H1 (cell line): ENCODE measurements at regions of chr16 and their contacts with region 1.

Region 1: GRCh38 chr16:67393035-67393787 is at the start of gene TPPP3:
- DNase-seq: peak in 1 of 2 experiments; percentile 87
- H3K4me3 ChIP-seq: peak within 1 kb of the TSS; percentile 21 to 58 (median 39); a peak in 7 of 8 replicates
- H3K27ac ChIP-seq: no peak within 1 kb of the TSS
- H3K4me1 ChIP-seq: peaks cover 0 to 35% (median 23%) of the 10 kb centered on the region in 4 experiments; a peak in 6 of 7 replicates
- H3K27me3 ChIP-seq: peaks cover 24 to 48% (median 41%) of the 10 kb centered on the region in 4 experiments
- CTCF ChIP-seq: peak in 2 of 3 experiments; percentile 66 to 69; a peak in 3 of 4 replicates
- EP300 ChIP-seq: peak in 1 of 2 experiments; percentile 62; a peak in 1 of 3 replicates
- POLR2A ChIP-seq: no peak
- RAD21 ChIP-seq: peak; percentile 39 to 53; a peak in 2 of 4 replicates
- total RNA-seq, gene TPPP3: 0.61 and 1.0 TPM in 2 replicates

Region 2: DNA sequence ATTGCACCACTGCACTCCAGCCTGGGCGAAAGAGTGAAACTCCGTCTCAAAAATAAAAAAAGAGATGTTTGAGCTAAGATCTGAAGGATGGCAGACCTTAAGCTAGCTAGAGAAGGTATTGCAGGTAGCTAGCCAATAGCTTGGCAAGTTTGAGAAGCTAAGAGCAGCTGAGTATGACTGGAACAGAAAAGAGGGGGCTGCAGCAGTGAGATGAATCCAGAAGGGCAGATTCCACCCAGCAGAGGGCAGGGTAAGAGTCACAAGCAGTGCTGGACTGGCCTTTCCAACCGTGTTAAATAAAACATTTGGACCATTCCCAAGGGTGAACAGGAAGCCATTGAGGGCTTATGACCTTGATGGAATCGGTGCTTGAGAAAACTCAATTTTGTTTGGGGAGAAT is 289.1 kb before region 1 on chr16:
- CTCF ChIA-PET with region 1: no interaction called
- POLR2A ChIA-PET with region 1: no interaction called
- DNase-seq: peak in 1 of 2 experiments; percentile 64
- H3K4me3 ChIP-seq: no peak overlapping the region
- H3K27ac ChIP-seq: no peak overlapping the region
- H3K4me1 ChIP-seq: peaks cover 0 to 2% (median under 1%) of the 10 kb centered on the region in 4 experiments; a peak in 3 of 7 replicates
- H3K27me3 ChIP-seq: peaks cover 0 to 4% (median 1%) of the 10 kb centered on the region in 4 experiments; a peak in 2 of 7 replicates
- CTCF ChIP-seq: peak; percentile 64 to 84 (median 64)
- EP300 ChIP-seq: no peak
- POLR2A ChIP-seq: no peak
- RAD21 ChIP-seq: peak; percentile 21 to 40

Region 3: GRCh38 chr16:67173808-67174705 is 219.2 kb before region 1 on chr16:
- CTCF ChIA-PET with region 1: no interaction called
- POLR2A ChIA-PET with region 1: no interaction called
- DNase-seq: peak in 1 of 2 experiments; percentile 78
- H3K4me3 ChIP-seq: peak overlapping the region; percentile 27 to 57 (median 34)
- H3K27ac ChIP-seq: no peak overlapping the region
- H3K4me1 ChIP-seq: peaks cover 0 to 40% (median 30%) of the 10 kb centered on the region in 4 experiments; a peak in 6 of 7 replicates
- H3K27me3 ChIP-seq: peaks cover 50 to 90% (median 86%) of the 10 kb centered on the region in 4 experiments
- CTCF ChIP-seq: peak in 2 of 3 experiments; percentile 14 to 15; a peak in 2 of 4 replicates
- EP300 ChIP-seq: no peak
- POLR2A ChIP-seq: no peak
- RAD21 ChIP-seq: peak; percentile 7 to 23; a peak in 2 of 4 replicates

Region 4: GRCh38 chr16:67326472-67327309 is 66.5 kb before region 1 on chr16 and contains the starts of genes KCTD19 and LRRC36:
- CTCF ChIA-PET with region 1: interaction called, 18 read pairs
- POLR2A ChIA-PET with region 1: no interaction called
- DNase-seq: peak; percentile 73 to 100
- H3K4me3 ChIP-seq: peak within 1 kb of the TSS; percentile 36 to 68 (median 52)
- H3K27ac ChIP-seq: no peak within 1 kb of the TSS
- H3K4me1 ChIP-seq: no peaks in the 10 kb centered on the region; a peak in 1 of 7 replicates
- H3K27me3 ChIP-seq: peaks cover 0 to 4% (median under 1%) of the 10 kb centered on the region in 4 experiments; a peak in 3 of 7 replicates
- CTCF ChIP-seq: peak; percentile 75 to 90 (median 78)
- EP300 ChIP-seq: no peak
- POLR2A ChIP-seq: no peak
- RAD21 ChIP-seq: peak; percentile 53 to 59
- total RNA-seq, gene KCTD19: 0.06 and 0.63 TPM in 2 replicates
- total RNA-seq, gene LRRC36: 0.44 TPM in 1 of 2 replicates, not detected in the other

Region 5: GRCh38 chr16:67349172-67349571 is 44.0 kb before region 1 on chr16:
- CTCF ChIA-PET with region 1: interaction called, 14 read pairs
- POLR2A ChIA-PET with region 1: no interaction called
- DNase-seq: no peak
- H3K4me3 ChIP-seq: no peak overlapping the region
- H3K27ac ChIP-seq: no peak overlapping the region
- H3K4me1 ChIP-seq: no peaks in the 10 kb centered on the region
- H3K27me3 ChIP-seq: 0 out of 7 replicates have a peak, but pooled peaks cover 0 to 2% (median 0%) of the 10 kb centered on the region in 4 experiments
- CTCF ChIP-seq: no peak
- EP300 ChIP-seq: no peak
- POLR2A ChIP-seq: no peak
- RAD21 ChIP-seq: no peak

Region 6: DNA sequence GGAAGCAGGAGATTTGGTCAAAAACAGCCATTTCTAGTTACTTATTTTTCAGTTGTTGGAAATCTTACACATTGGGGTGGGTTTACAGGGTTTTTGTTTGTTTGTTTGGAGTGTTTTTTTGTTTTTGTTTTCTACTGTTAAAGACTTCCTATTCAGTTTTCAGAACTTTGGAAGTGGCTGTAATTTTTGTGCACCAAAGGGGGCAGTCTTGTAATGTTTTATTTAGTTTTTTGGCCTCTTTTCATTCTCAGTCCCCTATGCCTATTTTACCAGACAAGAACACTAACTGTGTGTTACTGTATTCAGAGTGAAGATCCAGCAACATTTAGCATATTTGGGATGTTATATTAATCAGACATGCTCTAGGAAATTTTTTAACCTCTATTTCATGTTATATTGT is 20.5 kb before region 1 on chr16:
- CTCF ChIA-PET with region 1: interaction called, 26 read pairs
- POLR2A ChIA-PET with region 1: no interaction called
- DNase-seq: no peak
- H3K4me3 ChIP-seq: no peak overlapping the region
- H3K27ac ChIP-seq: no peak overlapping the region
- H3K4me1 ChIP-seq: no peaks in the 10 kb centered on the region
- H3K27me3 ChIP-seq: peaks cover 0 to 5% (median 0%) of the 10 kb centered on the region in 4 experiments; a peak in 3 of 7 replicates
- CTCF ChIP-seq: peak in 2 of 3 experiments; percentile 28 to 35; a peak in 2 of 4 replicates
- EP300 ChIP-seq: no peak
- POLR2A ChIP-seq: no peak
- RAD21 ChIP-seq: peak; percentile 51 to 57

Region 7: DNA sequence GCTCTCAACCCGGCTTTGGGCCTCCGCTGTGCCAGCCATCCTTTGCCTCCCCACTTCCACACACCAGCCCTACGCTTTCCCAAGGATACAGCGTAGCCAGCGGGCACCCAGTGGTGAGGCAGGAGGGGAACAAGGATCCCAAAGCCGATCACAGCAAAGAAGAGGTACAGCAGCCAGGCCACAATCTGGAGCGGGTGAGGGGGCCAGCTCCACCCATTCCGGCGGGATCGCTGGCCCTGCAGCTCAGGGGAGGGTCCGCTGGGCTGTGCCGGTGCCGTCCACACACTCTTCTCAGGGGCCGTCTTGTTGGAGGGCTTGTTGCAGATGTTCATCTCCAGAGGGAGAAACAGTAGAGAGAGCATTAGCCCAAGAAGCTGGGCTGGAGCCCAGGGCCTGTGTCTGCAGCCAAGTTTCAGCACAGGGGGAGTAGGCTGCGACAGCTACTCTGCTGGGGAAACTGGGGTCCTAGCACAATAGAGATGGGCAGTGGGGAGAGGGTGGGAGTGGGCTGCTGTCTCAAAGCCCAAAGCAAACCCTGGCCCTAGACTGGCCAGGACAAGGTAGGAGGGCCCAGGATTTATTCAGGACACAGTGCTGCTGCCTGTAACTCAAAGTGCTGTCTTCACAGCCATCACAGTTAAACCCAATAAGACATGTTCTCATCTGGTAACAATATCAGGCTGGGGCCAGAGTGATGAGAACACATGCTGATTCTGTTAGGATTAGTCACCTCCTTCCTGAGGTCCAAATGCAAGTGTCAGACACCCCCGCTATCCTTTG is 13.1 kb after region 1 on chr16:
- CTCF ChIA-PET with region 1: interaction called, 476 read pairs
- POLR2A ChIA-PET with region 1: interaction called, 4 read pairs
- DNase-seq: no peak
- H3K4me3 ChIP-seq: no peak overlapping the region
- H3K27ac ChIP-seq: no peak overlapping the region
- H3K4me1 ChIP-seq: peaks cover 0 to 26% (median 9%) of the 10 kb centered on the region in 4 experiments; a peak in 5 of 7 replicates
- H3K27me3 ChIP-seq: no peaks in the 10 kb centered on the region; a peak in 1 of 7 replicates
- CTCF ChIP-seq: no peak
- EP300 ChIP-seq: no peak
- POLR2A ChIP-seq: no peak
- RAD21 ChIP-seq: no peak

Region 8: DNA sequence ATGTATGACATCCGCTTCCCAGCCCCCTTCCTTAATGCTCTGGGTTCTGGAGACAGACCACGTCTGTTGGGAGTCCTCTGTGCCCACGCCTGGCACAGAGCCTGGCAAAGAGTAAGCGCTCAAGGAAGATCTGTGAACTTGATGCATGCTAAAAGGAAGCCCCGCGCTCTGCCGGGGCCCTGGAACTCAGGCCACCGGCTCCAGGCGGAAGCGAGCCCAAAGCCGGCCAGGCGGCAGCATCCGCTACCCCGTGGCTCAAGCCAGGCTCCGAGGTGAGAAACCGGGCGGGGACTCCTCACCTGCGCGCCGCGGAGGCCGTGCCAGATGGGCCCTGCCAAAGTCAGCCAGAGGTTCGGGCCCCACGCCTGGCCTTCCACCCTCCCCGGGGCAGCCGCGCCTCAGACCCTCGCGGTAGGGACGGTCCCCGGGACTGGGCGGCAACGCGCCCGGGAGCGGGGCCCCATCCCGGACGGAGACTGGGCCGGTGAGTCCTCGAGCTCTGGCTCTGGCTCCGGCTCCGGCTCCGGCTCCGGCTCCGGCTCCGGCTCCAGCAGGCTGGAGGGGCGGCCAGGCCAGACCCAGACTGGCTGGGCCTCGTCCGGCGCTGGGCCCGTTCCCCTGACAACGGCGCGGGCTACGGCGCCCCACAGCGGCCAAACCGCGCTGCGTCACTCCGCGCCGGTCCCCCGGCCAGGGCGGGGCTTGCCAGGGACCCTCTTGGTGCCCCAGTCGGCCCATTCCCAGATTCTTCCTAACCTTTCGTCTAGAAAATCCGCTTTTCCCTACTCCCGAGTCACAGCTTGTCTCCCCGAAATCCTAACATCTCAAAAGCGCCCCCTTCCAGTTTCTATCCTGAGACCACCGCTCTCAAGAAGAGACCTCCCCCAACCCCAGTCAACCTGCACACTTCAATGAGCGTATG is 22.9 kb after region 1 on chr16 and contains the start of gene ZDHHC1:
- CTCF ChIA-PET with region 1: interaction called, 476 read pairs
- POLR2A ChIA-PET with region 1: interaction called, 5 read pairs
- DNase-seq: peak in 1 of 2 experiments; percentile 94
- H3K4me3 ChIP-seq: peak within 1 kb of the TSS; percentile 40 to 66 (median 54)
- H3K27ac ChIP-seq: no peak within 1 kb of the TSS
- H3K4me1 ChIP-seq: peaks cover 0 to 10% (median 5%) of the 10 kb centered on the region in 4 experiments; a peak in 4 of 7 replicates
- H3K27me3 ChIP-seq: no peaks in the 10 kb centered on the region; a peak in 2 of 7 replicates
- CTCF ChIP-seq: peak; percentile 62 to 77 (median 66)
- EP300 ChIP-seq: no peak
- POLR2A ChIP-seq: peak in 1 of 2 experiments; percentile 37; a peak in 1 of 3 replicates
- RAD21 ChIP-seq: peak; percentile 54 to 65
- total RNA-seq, gene ZDHHC1: 3.1 and 3.5 TPM in 2 replicates